Naive thymus-derived CD8-positive, alpha-beta T cell (primary cell): ENCODE measurements at regions of chr10 and their contacts with region 1.

Region 1: GRCh38 chr10:69348816-69349541 is 67.7 kb downstream of the TACR2 start:
- DNase-seq: peak in 1 of 10 donors; percentile 28
- ATAC-seq: no peak
- H3K4me3 Mint-ChIP-seq: peak overlapping the region; percentile 58 to 83 (median 79)
- H3K27ac Mint-ChIP-seq: peak overlapping the region; percentile 76 to 96 (median 95)
- H3K4me1 Mint-ChIP-seq: peaks cover 36 to 87% (median 80%) of the 10 kb centered on the region in 4 donors
- H3K27me3 Mint-ChIP-seq: no peaks in the 10 kb centered on the region

Region 2: DNA sequence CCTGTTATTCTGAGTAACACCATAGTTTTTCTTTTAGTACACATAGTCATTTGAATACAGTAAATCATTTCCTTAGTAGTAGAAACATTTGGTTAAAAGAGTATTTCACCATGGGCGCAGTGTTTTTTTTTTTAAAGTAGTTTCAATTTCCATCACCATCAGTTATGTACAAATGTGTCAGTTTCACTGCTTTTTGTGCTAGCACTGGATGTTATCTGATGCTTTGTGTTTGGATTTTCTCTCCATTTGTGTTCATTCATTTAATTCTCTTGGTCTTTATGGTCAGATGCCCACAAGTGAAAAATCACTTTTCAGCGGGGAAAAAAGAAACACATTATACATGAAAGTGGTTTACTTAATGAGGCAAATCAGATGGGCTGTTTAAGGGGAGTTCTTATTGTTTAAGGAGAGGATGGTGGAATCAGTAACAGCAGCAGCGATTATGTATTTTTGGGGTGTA is 86.7 kb before region 1 on chr10:
- POLR2A ChIA-PET with region 1: no interaction called
- DNase-seq: no peak
- ATAC-seq: no peak
- H3K4me3 Mint-ChIP-seq: peak overlapping the region in 1 of 10 donors; percentile 3
- H3K27ac Mint-ChIP-seq: peak overlapping the region in 2 of 10 donors; percentile 9 to 16
- H3K4me1 Mint-ChIP-seq: no peaks in the 10 kb centered on the region
- H3K27me3 Mint-ChIP-seq: no peaks in the 10 kb centered on the region

Region 3: DNA sequence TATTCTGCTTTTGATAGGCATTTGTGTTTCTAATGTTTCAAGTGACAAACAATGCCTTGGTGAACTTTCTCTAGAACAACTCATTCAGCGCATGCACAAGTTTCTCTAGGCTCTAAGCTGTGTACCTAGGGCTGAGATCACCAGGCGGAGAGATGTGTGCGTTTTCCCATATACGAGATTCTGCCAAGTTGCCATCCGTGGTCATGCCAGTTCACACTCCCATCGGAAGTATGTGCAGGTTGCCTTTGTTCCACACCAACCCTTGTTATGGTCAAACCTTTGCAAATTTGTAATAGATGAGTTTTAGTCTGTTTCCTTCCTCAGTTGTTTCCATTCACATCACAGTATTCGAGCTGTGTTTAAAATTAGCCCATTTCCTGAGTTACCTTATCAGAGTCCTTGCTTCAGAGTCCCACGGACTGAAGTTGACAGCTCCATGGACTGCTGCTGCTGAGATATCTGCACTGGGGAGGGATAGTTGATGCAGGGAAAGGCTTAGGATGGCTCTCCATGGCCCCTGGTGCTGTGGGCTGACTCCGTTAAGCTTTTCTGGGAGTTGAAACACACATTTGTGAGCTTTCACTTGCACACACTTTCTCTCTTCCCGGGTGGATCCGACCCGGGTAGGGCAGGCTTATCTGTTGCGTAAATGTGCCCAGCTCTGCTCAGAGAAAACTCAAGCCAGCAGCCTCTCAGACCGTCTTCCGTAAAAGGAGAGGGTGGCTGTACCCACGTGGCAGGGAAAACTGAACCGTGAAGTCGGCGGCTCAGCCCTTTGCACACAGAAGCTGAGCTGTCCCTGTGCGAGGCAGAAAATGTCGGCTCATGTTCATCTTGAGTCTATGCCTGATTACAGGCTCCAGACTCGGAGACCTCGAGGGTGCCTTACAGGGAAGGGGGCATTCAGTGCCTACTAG is 21.3 kb before region 1 on chr10:
- POLR2A ChIA-PET with region 1: interaction called, 12 read pairs
- DNase-seq: peak in 8 of 10 donors; percentile 20 to 64 (median 33)
- ATAC-seq: peak; percentile 85 to 92
- H3K4me3 Mint-ChIP-seq: peak overlapping the region; percentile 68 to 87 (median 80)
- H3K27ac Mint-ChIP-seq: peak overlapping the region; percentile 84 to 96 (median 92)
- H3K4me1 Mint-ChIP-seq: peaks cover 28 to 78% (median 68%) of the 10 kb centered on the region in 4 donors
- H3K27me3 Mint-ChIP-seq: no peaks in the 10 kb centered on the region

Region 4: GRCh38 chr10:69360485-69361324 is 11.7 kb after region 1 on chr10:
- POLR2A ChIA-PET with region 1: interaction called, 12 read pairs
- DNase-seq: no peak
- ATAC-seq: no peak
- H3K4me3 Mint-ChIP-seq: peak overlapping the region; percentile 45 to 84 (median 64)
- H3K27ac Mint-ChIP-seq: peak overlapping the region; percentile 75 to 97 (median 92)
- H3K4me1 Mint-ChIP-seq: peaks cover 26 to 79% (median 63%) of the 10 kb centered on the region in 4 donors
- H3K27me3 Mint-ChIP-seq: no peaks in the 10 kb centered on the region